Sigmoid colon (tissue), 7 donors: ENCODE measurements at regions of chr5 and their contacts with region 1.

Region 1: DNA sequence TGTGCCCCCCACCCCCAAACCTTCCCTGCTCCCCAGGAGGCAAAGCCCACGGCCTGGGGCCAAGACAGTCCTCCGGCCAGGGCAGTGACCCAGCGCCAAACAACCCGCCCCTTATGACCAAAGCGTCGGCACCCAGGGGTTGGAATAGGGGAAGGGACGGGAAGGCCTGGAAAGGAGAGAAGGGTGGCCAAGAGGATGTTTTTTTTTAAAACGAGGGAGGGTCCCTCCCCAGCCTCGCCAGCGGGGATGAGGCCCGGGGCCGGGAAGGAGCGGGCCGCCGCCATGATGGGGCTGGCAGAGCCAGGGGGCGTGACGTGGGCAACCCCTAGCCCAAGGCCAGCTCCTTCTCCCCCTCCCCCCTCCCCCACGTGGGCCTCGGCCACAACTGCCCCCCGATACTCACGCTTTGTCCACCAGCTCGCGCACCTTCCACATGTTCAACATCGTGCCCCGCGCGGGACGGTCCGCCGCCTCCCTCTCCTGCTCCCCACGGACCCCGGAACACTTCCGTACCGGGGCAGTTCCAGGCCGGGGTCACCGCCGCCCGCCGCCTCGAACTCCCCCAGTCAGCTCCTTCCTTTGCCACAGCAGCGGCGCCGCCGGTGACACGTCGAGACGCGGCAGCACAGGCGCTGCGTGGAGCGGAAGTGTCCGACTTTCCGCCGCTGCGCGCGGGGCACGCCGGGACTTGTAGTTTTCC is at the start of gene CLINT1:
- DNase-seq: peak; percentile 95
- H3K4me3 ChIP-seq: peak within 1 kb of the TSS; percentile 68 to 96 (median 87)
- H3K27ac ChIP-seq: peak within 1 kb of the TSS; percentile 85 to 91 (median 89)
- H3K4me1 ChIP-seq: peaks cover 0 to 42% (median 33%) of the 10 kb centered on the region in 4 donors
- H3K27me3 ChIP-seq: no peaks in the 10 kb centered on the region
- CTCF ChIP-seq: no peak
- EP300 ChIP-seq: no peak
- POLR2A ChIP-seq: peak; percentile 54 to 73
- total RNA-seq, gene CLINT1: 88.1 to 171 (median 109) TPM

Region 2: GRCh38 chr5:157799578-157799977 is 59.1 kb before region 1 on chr5:
- intact Hi-C with region 1: no loop called
- DNase-seq: no peak
- H3K4me3 ChIP-seq: no peak overlapping the region
- H3K27ac ChIP-seq: no peak overlapping the region
- H3K4me1 ChIP-seq: no peaks in the 10 kb centered on the region
- H3K27me3 ChIP-seq: no peaks in the 10 kb centered on the region
- CTCF ChIP-seq: no peak
- EP300 ChIP-seq: no peak
- POLR2A ChIP-seq: no peak

Region 3: GRCh38 chr5:157907479-157907878 is 48.8 kb after region 1 on chr5:
- intact Hi-C with region 1: no loop called
- DNase-seq: no peak
- H3K4me3 ChIP-seq: no peak overlapping the region
- H3K27ac ChIP-seq: no peak overlapping the region
- H3K4me1 ChIP-seq: peaks cover 0 to 16% (median 12%) of the 10 kb centered on the region in 4 donors
- H3K27me3 ChIP-seq: no peaks in the 10 kb centered on the region
- CTCF ChIP-seq: no peak
- EP300 ChIP-seq: no peak
- POLR2A ChIP-seq: no peak

Region 4: GRCh38 chr5:157917899-157918809 is 59.5 kb after region 1 on chr5:
- intact Hi-C with region 1: loop called (anchors 5 kb)
- DNase-seq: peak; percentile 68
- H3K4me3 ChIP-seq: no peak overlapping the region
- H3K27ac ChIP-seq: peak overlapping the region in 3 of 4 donors; percentile 15 to 81 (median 27)
- H3K4me1 ChIP-seq: peaks cover 0 to 41% (median 25%) of the 10 kb centered on the region in 4 donors
- H3K27me3 ChIP-seq: no peaks in the 10 kb centered on the region
- CTCF ChIP-seq: peak in 2 of 4 experiments; percentile 30 to 40
- EP300 ChIP-seq: no peak
- POLR2A ChIP-seq: no peak

Region 5: DNA sequence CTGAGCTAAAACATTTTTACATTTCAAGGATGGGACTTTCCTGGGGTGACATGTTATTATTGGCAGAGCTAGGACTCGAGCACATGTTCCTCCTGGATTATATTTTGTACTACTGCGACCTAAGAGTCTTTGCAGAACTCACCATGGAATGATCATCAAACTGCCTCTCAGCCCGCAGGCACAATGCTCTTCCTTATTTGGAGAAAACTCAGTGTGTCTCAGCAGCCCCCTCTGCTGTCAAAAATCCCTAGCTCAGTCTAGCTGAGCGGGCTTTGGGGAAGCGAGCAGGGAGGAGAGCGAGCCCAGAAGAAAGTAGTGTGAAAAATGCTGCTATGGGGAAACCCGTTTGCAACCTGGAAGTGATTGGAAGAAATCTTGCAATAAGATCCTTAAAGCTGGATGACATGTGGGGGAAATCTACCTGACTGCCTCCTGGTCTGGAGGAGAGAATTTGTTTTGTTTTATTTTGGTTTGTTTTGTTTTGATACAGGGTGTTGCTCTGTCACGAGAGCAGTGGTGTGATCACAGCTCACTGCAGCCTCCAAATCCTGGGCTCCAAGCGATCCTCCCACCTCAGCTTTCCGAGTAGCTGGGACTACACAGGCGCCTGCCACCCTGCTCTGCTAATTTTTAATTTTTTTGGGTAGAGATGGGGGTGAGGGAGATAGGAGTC is 90.2 kb after region 1 on chr5:
- intact Hi-C with region 1: loop called (anchors 1 kb)
- DNase-seq: peak; percentile 96
- H3K4me3 ChIP-seq: peak overlapping the region in 2 of 4 donors; percentile 4 to 7
- H3K27ac ChIP-seq: peak overlapping the region; percentile 77 to 84 (median 79)
- H3K4me1 ChIP-seq: peaks cover 0 to 18% (median 7%) of the 10 kb centered on the region in 4 donors
- H3K27me3 ChIP-seq: no peaks in the 10 kb centered on the region
- CTCF ChIP-seq: peak; percentile 69 to 82 (median 76)
- EP300 ChIP-seq: peak; percentile 31 to 95 (median 76)
- POLR2A ChIP-seq: no peak

Region 6: DNA sequence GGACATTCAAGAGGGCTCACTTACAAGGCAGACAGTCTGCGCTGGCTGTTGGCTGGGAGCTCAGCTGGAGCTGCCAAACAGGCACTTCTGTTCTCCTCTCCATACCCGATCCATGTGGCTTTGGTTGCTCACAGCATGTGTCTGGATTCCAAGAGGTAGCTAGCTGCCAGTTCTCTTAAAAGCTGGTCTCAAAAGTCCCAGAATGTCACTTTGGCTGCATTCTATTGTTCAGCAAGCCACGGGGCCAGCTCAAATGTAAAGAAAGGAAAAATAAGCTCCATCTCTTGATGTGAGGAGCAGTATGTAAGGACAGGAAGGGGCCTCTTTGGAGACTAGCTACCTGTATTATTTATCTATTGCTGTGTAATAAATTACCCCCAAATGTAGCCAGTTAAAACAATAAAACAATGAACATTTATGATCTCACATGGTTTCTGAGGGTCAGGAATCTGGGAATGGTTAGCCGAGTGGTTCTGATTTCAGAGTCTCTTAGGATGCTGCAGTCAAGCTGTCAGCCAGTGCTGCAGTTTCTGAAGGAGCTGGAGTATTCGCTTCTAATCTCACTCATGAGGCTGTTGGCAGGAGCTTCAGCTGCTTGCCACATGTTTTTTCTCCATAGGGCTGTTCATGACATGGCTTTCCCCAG is 113.0 kb after region 1 on chr5:
- intact Hi-C with region 1: no loop called
- DNase-seq: peak; percentile 73
- H3K4me3 ChIP-seq: no peak overlapping the region
- H3K27ac ChIP-seq: peak overlapping the region in 3 of 4 donors; percentile 67 to 76 (median 75)
- H3K4me1 ChIP-seq: peaks cover 2 to 21% (median 16%) of the 10 kb centered on the region in 4 donors
- H3K27me3 ChIP-seq: no peaks in the 10 kb centered on the region
- CTCF ChIP-seq: no peak
- EP300 ChIP-seq: no peak
- POLR2A ChIP-seq: no peak

Region 7: GRCh38 chr5:158390577-158390976 is 531.9 kb after region 1 on chr5:
- intact Hi-C with region 1: no loop called
- DNase-seq: no peak
- H3K4me3 ChIP-seq: no peak overlapping the region
- H3K27ac ChIP-seq: no peak overlapping the region
- H3K4me1 ChIP-seq: no peaks in the 10 kb centered on the region
- H3K27me3 ChIP-seq: no peaks in the 10 kb centered on the region
- CTCF ChIP-seq: no peak
- EP300 ChIP-seq: no peak
- POLR2A ChIP-seq: no peak